ENCODE measurements at regions of chr1 and their contacts with region 1.

Region 1: DNA sequence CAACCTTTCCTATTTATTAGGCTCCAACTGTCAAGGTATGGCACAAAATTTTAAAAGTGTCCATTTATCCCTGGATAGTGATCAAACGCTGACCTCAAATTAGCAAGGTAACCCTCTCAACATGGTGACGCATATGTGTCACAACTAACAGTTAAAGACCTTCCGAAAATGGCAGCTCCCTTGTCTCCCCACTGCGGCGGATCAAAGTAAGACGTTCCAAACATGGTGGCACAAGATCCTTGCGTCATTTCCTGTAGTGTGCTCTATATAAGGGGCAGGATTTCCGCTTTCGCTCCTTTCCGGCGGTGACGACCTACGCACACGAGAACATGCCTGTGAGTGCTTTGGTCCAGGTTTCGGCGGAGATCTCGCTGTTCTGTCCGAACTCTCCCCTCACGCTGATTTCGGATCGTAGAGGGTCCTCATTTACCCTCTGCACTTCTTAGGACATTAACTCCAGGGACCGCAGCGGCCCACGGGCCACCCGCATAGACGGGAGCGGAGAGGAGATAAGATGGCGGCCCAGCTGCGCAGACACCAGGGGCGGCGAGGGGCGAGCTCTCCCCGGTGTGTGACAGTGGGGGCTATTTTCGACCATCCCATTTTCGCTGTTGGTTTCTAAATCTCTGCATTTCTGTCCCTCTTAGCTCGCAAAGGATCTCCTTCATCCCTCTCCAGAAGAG is at the start of gene RPS27:
- DNase-seq: peak; percentile 96
- H3K4me3 ChIP-seq: peak within 1 kb of the TSS; percentile 15 to 86 (median 79)
- H3K27ac ChIP-seq: peak within 1 kb of the TSS; percentile 90
- H3K4me1 ChIP-seq: peaks cover 24% of the 10 kb centered on the region
- H3K27me3 ChIP-seq: no peaks in the 10 kb centered on the region
- CTCF ChIP-seq: no peak
- POLR2A ChIP-seq: peak; percentile 99
- total RNA-seq, gene RPS27: 1,120 and 1,234 TPM in 2 replicates

Region 2: DNA sequence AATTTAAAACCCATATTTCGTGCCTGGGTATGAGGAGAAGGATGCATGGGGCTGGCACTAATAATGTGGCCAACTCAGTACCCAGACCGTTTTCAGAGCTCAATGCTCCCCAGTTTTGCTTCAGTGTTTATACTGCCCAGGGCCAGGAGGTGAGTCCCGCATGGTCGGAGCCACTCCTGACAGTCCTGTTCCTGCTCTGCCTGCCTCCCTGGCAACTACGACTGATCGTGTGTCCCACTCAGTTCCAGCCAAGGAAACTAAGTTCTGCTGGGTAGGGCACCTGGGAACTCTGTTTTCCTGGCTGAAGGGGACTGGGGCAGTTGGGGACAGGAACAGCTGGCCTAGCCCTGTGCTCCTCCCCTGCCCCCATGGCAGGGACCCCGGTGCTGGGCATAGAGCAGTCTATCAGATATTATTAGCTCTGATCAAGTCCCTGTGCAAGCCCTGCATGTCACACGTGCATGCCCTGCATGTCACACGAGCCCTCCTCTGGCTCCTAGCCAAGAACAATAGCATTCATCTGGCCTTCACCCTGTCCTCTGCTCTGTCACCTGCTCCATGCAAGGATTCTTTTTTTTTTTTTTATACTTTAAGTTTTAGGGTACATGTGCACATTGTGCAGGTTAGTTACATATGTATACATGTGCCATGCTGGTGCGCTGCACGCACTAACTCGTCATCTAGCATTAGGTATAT is 549.2 kb before region 1 on chr1:
- CTCF ChIA-PET with region 1: no interaction called
- POLR2A ChIA-PET with region 1: no interaction called
- dilution Hi-C with region 1: no loop called
- intact Hi-C with region 1: no loop called
- DNase-seq: no peak
- H3K4me3 ChIP-seq: no peak overlapping the region
- H3K27ac ChIP-seq: no peak overlapping the region
- H3K4me1 ChIP-seq: no peaks in the 10 kb centered on the region
- H3K27me3 ChIP-seq: no peaks in the 10 kb centered on the region
- CTCF ChIP-seq: no peak
- POLR2A ChIP-seq: no peak

Region 3: DNA sequence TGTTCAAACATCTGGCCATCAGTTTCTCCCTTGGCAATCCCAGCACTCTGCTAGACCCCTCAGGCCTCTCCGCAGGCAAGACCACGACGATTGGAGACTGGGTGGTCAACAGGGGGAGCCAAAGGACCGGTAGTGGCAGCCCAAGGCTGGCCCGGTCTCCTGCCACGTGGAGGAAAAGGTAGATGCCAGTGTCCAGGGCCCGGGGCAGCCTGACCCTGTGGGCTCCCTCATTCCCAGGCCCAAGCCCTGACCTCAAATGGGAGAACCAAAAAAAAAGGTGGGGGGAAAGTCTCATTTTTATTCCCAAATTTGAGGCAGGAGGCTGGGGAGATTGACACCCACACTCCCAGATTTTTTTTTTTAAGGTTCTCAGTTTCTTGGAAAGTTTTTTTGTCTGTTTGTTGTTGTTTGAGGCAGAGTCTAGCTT is 479.6 kb before region 1 on chr1:
- CTCF ChIA-PET with region 1: interaction called, 3 read pairs
- POLR2A ChIA-PET with region 1: no interaction called
- dilution Hi-C with region 1: no loop called
- intact Hi-C with region 1: loop called (anchors 1 kb)
- DNase-seq: peak; percentile 71
- H3K4me3 ChIP-seq: no peak overlapping the region
- H3K27ac ChIP-seq: no peak overlapping the region
- H3K4me1 ChIP-seq: no peaks in the 10 kb centered on the region
- H3K27me3 ChIP-seq: no peaks in the 10 kb centered on the region
- CTCF ChIP-seq: peak; percentile 94
- POLR2A ChIP-seq: no peak

Region 4: DNA sequence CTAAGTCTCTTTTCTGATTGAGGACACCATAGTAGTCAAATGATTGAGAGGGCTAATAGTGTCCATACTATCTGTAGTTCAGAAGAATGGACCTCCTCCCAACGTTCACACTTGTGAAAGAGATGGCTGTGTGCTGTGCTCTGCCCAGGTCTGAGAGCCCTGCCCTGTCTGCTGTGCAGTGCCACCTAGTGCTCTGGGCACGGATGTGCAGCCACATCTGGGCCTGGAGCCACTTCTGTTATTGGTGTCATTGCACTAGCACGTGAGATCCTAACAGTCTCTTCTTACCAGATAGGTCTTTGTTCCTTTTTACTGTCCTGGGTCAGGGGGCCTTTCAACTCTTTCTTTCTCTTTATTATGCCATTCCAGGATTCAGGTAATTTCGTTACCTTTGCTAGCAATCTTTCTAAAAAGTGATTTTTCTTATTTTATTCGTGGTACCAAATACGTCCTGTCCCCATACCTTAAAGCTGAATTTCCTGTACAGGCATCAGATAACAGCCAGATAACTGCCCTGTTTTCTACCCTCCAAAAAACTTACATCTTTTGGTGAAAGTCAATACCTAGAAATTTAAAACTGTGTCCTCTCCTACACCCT is 241.1 kb before region 1 on chr1:
- CTCF ChIA-PET with region 1: no interaction called
- POLR2A ChIA-PET with region 1: no interaction called
- dilution Hi-C with region 1: no loop called
- intact Hi-C with region 1: loop called (anchors 1 kb)
- DNase-seq: peak; percentile 88
- H3K4me3 ChIP-seq: no peak overlapping the region
- H3K27ac ChIP-seq: peak overlapping the region; percentile 36
- H3K4me1 ChIP-seq: peaks cover 37% of the 10 kb centered on the region
- H3K27me3 ChIP-seq: no peaks in the 10 kb centered on the region
- CTCF ChIP-seq: peak; percentile 94 to 96
- POLR2A ChIP-seq: no peak

Region 5: GRCh38 chr1:153827168-153827964 is 163.2 kb before region 1 on chr1:
- CTCF ChIA-PET with region 1: interaction called, 29 read pairs
- POLR2A ChIA-PET with region 1: no interaction called
- dilution Hi-C with region 1: no loop called
- intact Hi-C with region 1: no loop called
- DNase-seq: no peak
- H3K4me3 ChIP-seq: no peak overlapping the region
- H3K27ac ChIP-seq: no peak overlapping the region
- H3K4me1 ChIP-seq: no peaks in the 10 kb centered on the region
- H3K27me3 ChIP-seq: no peaks in the 10 kb centered on the region
- CTCF ChIP-seq: no peak
- POLR2A ChIP-seq: no peak

Region 6: GRCh38 chr1:153958111-153958960 is 32.3 kb before region 1 on chr1 and contains the start of gene CRTC2:
- CTCF ChIA-PET with region 1: interaction called, 20 read pairs
- POLR2A ChIA-PET with region 1: interaction called, 3 read pairs
- dilution Hi-C with region 1: no loop called
- intact Hi-C with region 1: loop called (anchors 1 kb)
- DNase-seq: peak; percentile 98
- H3K4me3 ChIP-seq: peak within 1 kb of the TSS; percentile 47 to 80 (median 75)
- H3K27ac ChIP-seq: peak within 1 kb of the TSS; percentile 18
- H3K4me1 ChIP-seq: peaks cover 35% of the 10 kb centered on the region
- H3K27me3 ChIP-seq: no peaks in the 10 kb centered on the region
- CTCF ChIP-seq: no peak
- POLR2A ChIP-seq: peak; percentile 33
- total RNA-seq, gene CRTC2: 39.0 and 42.2 TPM in 2 replicates

Region 7: GRCh38 chr1:154157520-154158306 is 167.1 kb after region 1 on chr1:
- CTCF ChIA-PET with region 1: no interaction called
- POLR2A ChIA-PET with region 1: no interaction called
- dilution Hi-C with region 1: no loop called
- intact Hi-C with region 1: loop called (anchors 10 kb)
- DNase-seq: no peak
- H3K4me3 ChIP-seq: no peak overlapping the region
- H3K27ac ChIP-seq: no peak overlapping the region
- H3K4me1 ChIP-seq: peaks cover 22% of the 10 kb centered on the region
- H3K27me3 ChIP-seq: no peaks in the 10 kb centered on the region
- CTCF ChIP-seq: no peak
- POLR2A ChIP-seq: no peak

Measured in endothelial cell of umbilical vein (primary cell).